ENCODE measurements at regions of chr6 and their contacts with region 1.

Region 1: GRCh38 chr6:139375232-139376016 is 976 bp upstream of the CITED2 start:
- DNase-seq: peak; percentile 89
- ATAC-seq: peak; percentile 78 to 89 (median 82)
- H3K4me3 ChIP-seq: peak overlapping the region; percentile 69 to 97 (median 92)
- H3K27ac ChIP-seq: peak overlapping the region; percentile 90 to 100 (median 98)
- H3K4me1 ChIP-seq: peaks cover 0 to 32% (median 26%) of the 10 kb centered on the region in 9 donors
- H3K27me3 ChIP-seq: no peaks in the 10 kb centered on the region
- CTCF ChIP-seq: peak in 1 of 9 donors; percentile 9

Region 2: DNA sequence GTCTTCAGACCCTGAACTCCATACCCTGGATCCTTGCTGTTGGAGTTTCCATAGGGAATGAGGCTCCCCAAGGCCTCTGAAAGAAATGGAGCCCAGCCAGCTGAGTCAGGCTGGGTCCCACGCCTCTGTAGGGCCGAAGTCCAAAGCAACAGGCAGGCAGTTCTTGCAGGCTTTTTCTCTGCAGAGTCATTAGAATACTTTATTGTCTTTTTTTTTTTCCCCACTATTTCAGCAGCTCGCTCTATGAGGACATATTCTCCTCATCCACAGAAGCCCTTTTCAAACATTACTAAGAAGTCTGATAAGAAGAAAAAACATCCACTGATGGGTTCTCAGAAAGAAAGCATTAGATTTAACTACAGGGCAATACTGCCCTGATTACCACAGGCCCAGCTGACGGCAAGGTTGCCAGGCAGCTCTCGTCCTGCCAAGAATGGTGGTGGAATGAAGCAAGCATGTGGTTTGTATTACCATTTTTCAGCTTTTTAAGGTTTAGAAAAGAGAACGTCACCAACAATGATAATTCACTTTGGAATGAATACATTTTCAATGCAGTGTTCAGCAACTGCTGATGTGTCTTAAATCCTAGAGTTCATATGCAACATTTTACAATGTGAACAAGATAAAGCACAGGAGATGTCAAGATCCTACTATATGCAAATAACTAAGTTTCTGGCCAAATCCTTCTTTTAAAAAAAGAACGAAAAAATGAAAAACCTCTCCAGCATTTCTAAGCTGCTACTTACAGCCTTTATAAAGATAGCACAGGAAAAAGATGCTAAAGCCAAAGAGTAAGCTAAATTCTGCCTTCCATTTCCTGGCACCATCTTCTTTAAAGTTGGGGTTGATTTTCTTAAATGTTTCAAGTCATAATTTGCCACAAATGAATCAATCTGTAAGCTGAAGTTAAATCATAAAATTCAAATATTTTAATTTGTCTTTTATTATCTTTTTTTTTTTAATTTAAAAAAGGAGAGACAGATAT is 222.6 kb after region 1 on chr6:
- intact Hi-C with region 1: loop called in 2 of 10 experiments (anchors 5 to 10 kb)
- DNase-seq: peak; percentile 38 to 59
- ATAC-seq: peak; percentile 77 to 90 (median 88)
- H3K4me3 ChIP-seq: no peak overlapping the region
- H3K27ac ChIP-seq: peak overlapping the region in 9 of 10 donors; percentile 1 to 75 (median 53)
- H3K4me1 ChIP-seq: peaks cover 0 to 32% (median 20%) of the 10 kb centered on the region in 9 donors
- H3K27me3 ChIP-seq: no peaks in the 10 kb centered on the region
- CTCF ChIP-seq: no peak

Region 3: DNA sequence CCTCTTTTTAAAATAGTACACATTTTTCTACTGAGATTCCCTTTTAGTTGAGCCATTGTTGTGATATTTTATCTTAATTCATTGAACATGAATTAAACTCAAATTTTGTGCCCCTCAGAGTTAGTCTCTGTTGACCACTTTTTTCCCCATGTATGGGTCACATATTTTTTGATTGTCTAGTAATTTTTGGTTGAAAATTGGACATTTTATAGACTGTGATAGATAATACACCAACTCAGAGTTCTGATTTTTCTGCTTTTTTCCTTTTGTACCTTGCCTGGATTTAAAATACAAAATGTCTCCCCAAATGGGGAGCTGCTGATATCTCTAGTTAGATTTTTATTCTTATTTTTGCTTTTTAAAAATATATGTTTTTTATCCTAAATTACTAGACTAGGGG is 290.9 kb after region 1 on chr6:
- intact Hi-C with region 1: no loop called
- DNase-seq: no peak
- ATAC-seq: no peak
- H3K4me3 ChIP-seq: no peak overlapping the region
- H3K27ac ChIP-seq: no peak overlapping the region
- H3K4me1 ChIP-seq: no peaks in the 10 kb centered on the region
- H3K27me3 ChIP-seq: no peaks in the 10 kb centered on the region
- CTCF ChIP-seq: no peak

Region 4: DNA sequence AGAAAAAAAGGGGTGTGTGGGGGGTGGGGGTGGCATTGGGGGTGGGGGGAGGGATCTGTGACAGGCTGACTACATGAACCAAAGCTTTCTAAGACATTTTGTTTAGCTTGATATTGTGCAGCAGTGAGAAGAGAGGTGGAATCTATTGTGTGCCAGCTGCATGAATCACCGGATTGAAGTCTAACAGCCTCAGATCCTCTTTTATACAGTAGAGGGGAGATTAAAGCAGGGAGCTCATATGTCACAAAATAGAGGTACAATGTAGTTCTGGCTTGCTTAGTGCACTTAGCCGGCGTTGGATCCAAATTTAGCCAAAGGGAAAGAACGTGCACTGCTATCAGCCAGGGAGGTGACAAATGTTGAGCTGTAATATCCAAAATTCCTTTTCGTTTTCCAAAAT is 403.3 kb after region 1 on chr6:
- intact Hi-C with region 1: loop called in 1 of 10 experiments (anchors 5 kb)
- DNase-seq: peak in 1 of 2 donors; percentile 16
- ATAC-seq: peak in 7 of 8 donors; percentile 61 to 95 (median 92)
- H3K4me3 ChIP-seq: no peak overlapping the region
- H3K27ac ChIP-seq: peak overlapping the region in 5 of 10 donors; percentile 45 to 72 (median 69)
- H3K4me1 ChIP-seq: peaks cover 0 to 16% (median 0%) of the 10 kb centered on the region in 9 donors
- H3K27me3 ChIP-seq: no peaks in the 10 kb centered on the region
- CTCF ChIP-seq: no peak

Region 5: GRCh38 chr6:139973669-139974344 is 598.4 kb after region 1 on chr6:
- intact Hi-C with region 1: loop called in 4 of 10 experiments (anchors 5 to 10 kb)
- DNase-seq: no peak
- ATAC-seq: peak in 7 of 8 donors; percentile 76 to 95 (median 88)
- H3K4me3 ChIP-seq: peak overlapping the region in 1 of 10 donors; percentile 0
- H3K27ac ChIP-seq: peak overlapping the region; percentile 11 to 85 (median 65)
- H3K4me1 ChIP-seq: peaks cover 0 to 31% (median 20%) of the 10 kb centered on the region in 9 donors
- H3K27me3 ChIP-seq: no peaks in the 10 kb centered on the region
- CTCF ChIP-seq: no peak

Region 6: GRCh38 chr6:140078561-140079125 is 703.2 kb after region 1 on chr6:
- intact Hi-C with region 1: loop called in 5 of 10 experiments (anchors 5 to 10 kb)
- DNase-seq: peak in 1 of 2 donors; percentile 51
- ATAC-seq: peak; percentile 45 to 83 (median 60)
- H3K4me3 ChIP-seq: peak overlapping the region in 2 of 10 donors; percentile 3 to 12
- H3K27ac ChIP-seq: peak overlapping the region; percentile 71 to 89 (median 82)
- H3K4me1 ChIP-seq: peaks cover 0 to 36% (median 22%) of the 10 kb centered on the region in 9 donors
- H3K27me3 ChIP-seq: no peaks in the 10 kb centered on the region
- CTCF ChIP-seq: no peak

Region 7: GRCh38 chr6:140441256-140441655 is 1065.8 kb after region 1 on chr6:
- intact Hi-C with region 1: loop called in 7 of 10 experiments (anchors 1 to 10 kb)
- DNase-seq: peak; percentile 32 to 79
- ATAC-seq: peak; percentile 91 to 98 (median 94)
- H3K4me3 ChIP-seq: no peak overlapping the region
- H3K27ac ChIP-seq: peak overlapping the region in 6 of 10 donors; percentile 19 to 62 (median 48)
- H3K4me1 ChIP-seq: peaks cover 0 to 44% (median 16%) of the 10 kb centered on the region in 9 donors
- H3K27me3 ChIP-seq: no peaks in the 10 kb centered on the region
- CTCF ChIP-seq: peak; percentile 22 to 75 (median 61)